ENCODE measurements at regions of chr1 and their contacts with region 1.

Region 1: DNA sequence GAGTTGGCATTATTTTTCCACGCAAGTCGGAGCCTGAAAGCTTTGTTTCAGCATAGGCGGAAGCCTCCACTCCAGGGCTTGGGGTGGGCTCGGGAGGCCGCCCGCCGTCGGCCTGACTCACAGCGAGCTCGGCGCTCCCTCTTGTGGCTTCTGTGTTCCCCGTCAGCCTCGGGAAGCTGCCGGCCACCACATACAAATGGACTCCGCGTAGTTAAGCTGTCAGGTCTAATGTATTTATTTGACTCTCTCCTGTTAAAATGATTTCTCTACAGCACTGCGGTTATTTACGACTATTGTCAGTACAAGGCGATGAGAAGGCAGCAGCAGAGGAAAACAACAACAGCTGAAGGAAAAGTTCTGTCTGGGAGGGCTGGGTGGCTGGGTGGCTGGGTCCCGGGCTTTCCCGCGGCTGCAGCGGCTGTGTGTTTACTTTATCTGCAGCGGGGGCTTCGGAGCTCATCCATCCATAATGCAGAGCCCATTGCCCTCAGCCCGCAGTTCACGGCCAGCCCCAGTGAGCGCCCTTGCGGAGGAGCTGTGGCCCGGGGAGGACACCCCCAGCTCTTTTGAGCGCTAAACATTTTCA is 375.7 kb upstream of the CAMK1G start:
- DNase-seq: peak; percentile 59
- H3K4me3 Mint-ChIP-seq: no peak overlapping the region
- H3K27ac Mint-ChIP-seq: no peak overlapping the region
- H3K4me1 Mint-ChIP-seq: peaks cover 2% of the 10 kb centered on the region
- H3K27me3 Mint-ChIP-seq: peaks cover 40% of the 10 kb centered on the region

Region 2: DNA sequence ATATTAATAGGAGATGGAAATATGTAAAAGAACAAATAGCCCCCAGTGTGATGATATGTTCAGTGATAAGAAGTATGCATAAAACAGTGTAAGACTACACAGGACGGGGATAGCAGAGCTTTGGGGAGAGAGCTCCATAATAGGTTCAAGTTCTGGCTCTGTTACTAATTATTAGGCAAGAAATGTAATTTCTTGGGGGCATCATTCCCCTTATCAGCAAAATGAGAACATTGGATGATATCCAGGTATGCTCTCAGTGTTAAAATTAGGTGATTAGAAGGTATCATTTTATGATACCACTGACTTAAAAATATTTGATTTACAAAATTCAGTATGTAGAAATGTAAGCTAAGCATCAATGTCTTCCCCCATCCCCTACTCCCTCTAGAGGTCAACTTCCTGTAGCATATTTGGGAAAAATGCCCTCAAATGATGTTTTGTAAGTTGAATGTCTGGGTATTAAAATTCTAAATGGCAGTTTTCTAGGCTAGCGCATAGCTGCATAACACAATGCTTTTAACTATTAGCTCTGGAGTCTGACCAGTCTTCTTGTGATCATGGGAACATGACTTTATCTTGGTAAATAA is 210.0 kb before region 1 on chr1:
- intact Hi-C with region 1: no loop called
- DNase-seq: peak; percentile 29
- H3K4me3 Mint-ChIP-seq: no peak overlapping the region
- H3K27ac Mint-ChIP-seq: no peak overlapping the region
- H3K4me1 Mint-ChIP-seq: no peaks in the 10 kb centered on the region
- H3K27me3 Mint-ChIP-seq: peaks cover 24% of the 10 kb centered on the region

Region 3: DNA sequence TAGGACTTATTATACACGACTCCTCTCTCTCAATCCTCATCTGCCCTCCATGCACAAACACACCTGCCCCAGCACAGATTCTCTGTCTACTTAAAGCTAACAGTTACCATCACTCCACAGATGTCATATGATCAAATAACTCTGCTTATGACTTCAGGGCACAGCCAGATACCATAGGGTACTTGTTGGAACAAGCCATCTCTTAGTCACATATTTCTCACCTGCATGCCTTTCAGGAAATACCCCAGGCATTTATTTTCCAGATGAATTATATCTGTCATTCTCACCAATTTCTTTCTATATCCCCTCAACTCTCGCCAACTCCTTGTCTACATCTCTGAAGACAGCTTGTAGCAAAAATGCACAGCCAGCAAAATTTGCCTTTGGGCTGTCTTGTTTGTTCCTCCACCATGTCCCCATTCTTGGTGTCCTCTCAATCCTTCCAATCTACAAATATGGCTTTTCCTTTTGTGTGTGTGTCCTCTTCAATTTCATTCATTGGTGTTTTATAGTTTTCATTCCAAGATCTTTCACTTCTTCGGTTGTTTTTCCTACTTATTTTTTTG is 21.8 kb after region 1 on chr1:
- intact Hi-C with region 1: no loop called
- DNase-seq: no peak
- H3K4me3 Mint-ChIP-seq: no peak overlapping the region
- H3K27ac Mint-ChIP-seq: no peak overlapping the region
- H3K4me1 Mint-ChIP-seq: no peaks in the 10 kb centered on the region
- H3K27me3 Mint-ChIP-seq: peaks cover 5% of the 10 kb centered on the region

Region 4: GRCh38 chr1:209354111-209354839 is 146.5 kb after region 1 on chr1:
- intact Hi-C with region 1: loop called (anchors 10 kb)
- DNase-seq: peak; percentile 85
- H3K4me3 Mint-ChIP-seq: no peak overlapping the region
- H3K27ac Mint-ChIP-seq: no peak overlapping the region
- H3K4me1 Mint-ChIP-seq: no peaks in the 10 kb centered on the region
- H3K27me3 Mint-ChIP-seq: peaks cover 2% of the 10 kb centered on the region

Measured in activated CD4-positive, alpha-beta T cell treated with anti-CD3 and anti-CD28 coated beads, Interleukin-2, amount 10 ng/mL, durations not matched to agents 24 days and 14 days (primary cell).